ENCODE measurements at regions of chr5 and their contacts with region 1.

Region 1: GRCh38 chr5:56200856-56201666 is 32.1 kb downstream of the ANKRD55 start:
- DNase-seq: peak; percentile 81
- H3K4me3 Mint-ChIP-seq: no peak overlapping the region
- H3K27ac Mint-ChIP-seq: no peak overlapping the region
- H3K4me1 Mint-ChIP-seq: no peaks in the 10 kb centered on the region
- H3K27me3 Mint-ChIP-seq: no peaks in the 10 kb centered on the region
- CTCF ChIP-seq: peak; percentile 87

Region 2: DNA sequence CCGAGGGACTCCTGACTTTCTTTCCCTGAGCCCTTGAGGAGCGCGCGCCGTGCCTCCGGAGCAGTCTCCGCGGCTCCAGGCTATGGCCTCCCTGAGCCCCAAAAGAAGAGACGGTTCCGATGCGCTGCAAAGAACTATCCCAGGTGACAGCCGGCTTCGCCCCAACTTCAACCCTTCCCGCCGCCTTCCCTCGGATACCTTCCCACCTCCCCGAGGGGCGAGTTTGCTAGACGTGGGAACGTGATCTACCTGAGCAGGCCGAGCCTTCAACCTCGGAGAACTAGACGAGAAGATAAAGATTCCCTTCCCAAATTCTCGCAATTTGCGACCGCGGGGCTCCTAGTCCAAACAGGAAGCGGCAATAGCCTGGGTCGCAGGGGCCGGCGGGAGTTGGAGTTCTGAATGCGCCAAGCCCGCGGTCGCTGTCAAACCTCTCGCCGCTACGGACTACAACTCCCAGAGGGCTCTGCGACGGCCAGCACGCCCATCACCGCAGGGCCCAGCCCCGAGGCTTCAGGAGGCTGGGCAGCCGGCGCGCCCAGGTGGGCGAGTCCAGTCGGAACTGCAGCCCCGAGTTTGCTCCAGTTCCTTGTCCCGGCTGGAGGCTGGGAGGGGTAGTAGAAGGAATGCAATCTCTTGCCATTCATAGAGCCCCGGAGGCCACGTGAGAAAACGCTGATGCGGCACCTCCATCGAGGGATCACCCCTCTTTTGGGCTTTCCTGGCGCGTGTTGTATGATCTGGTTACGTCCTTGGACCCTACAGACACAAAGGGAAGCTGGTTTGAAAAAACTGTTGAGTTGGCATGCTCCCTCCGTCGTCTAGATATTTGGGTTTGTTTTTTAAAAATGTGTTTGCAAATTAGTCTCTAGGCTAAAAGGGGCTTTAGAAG is 488.8 kb before region 1 on chr5 and contains the start of gene SLC38A9:
- CTCF ChIA-PET with region 1: interaction called, 3 read pairs
- POLR2A ChIA-PET with region 1: no interaction called
- intact Hi-C with region 1: loop called (anchors 5 kb)
- DNase-seq: peak; percentile 93
- H3K4me3 Mint-ChIP-seq: peak within 1 kb of the TSS; percentile 98
- H3K27ac Mint-ChIP-seq: peak within 1 kb of the TSS; percentile 99
- H3K4me1 Mint-ChIP-seq: peaks cover 5% of the 10 kb centered on the region
- H3K27me3 Mint-ChIP-seq: no peaks in the 10 kb centered on the region
- CTCF ChIP-seq: no peak
- total RNA-seq, gene SLC38A9: 20.1 and 25.6 TPM in 2 replicates

Region 3: DNA sequence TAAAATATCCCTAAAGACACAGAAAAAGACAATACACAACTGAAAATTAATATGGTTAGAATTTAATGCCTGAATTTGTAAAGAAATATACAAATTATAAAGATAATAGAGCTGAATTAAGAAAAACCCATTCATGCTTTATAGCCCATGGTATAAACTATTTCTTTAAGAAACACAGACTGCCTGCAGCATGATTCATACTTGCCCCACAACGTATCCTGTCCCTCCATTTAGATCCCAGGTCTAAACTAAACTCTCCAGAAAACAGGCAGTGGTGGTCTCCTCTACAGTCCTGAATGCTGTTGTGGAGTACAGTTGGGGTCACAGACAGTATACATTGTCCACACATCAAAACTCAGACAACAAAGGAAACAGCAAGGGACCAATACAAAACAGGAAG is 231.1 kb before region 1 on chr5:
- CTCF ChIA-PET with region 1: interaction called, 22 read pairs
- POLR2A ChIA-PET with region 1: no interaction called
- intact Hi-C with region 1: no loop called
- DNase-seq: no peak
- H3K4me3 Mint-ChIP-seq: no peak overlapping the region
- H3K27ac Mint-ChIP-seq: no peak overlapping the region
- H3K4me1 Mint-ChIP-seq: peaks cover 13% of the 10 kb centered on the region
- H3K27me3 Mint-ChIP-seq: no peaks in the 10 kb centered on the region
- CTCF ChIP-seq: no peak

Region 4: GRCh38 chr5:55988979-55989638 is 212.0 kb before region 1 on chr5:
- CTCF ChIA-PET with region 1: interaction called, 59 read pairs
- POLR2A ChIA-PET with region 1: interaction called, 8 read pairs
- intact Hi-C with region 1: loop called (anchors 1 kb)
- DNase-seq: no peak
- H3K4me3 Mint-ChIP-seq: no peak overlapping the region
- H3K27ac Mint-ChIP-seq: no peak overlapping the region
- H3K4me1 Mint-ChIP-seq: peaks cover 25% of the 10 kb centered on the region
- H3K27me3 Mint-ChIP-seq: no peaks in the 10 kb centered on the region
- CTCF ChIP-seq: no peak

Region 5: GRCh38 chr5:56070851-56071465 is 130.1 kb before region 1 on chr5:
- CTCF ChIA-PET with region 1: interaction called, 3 read pairs
- POLR2A ChIA-PET with region 1: no interaction called
- intact Hi-C with region 1: loop called (anchors 10 kb)
- DNase-seq: no peak
- H3K4me3 Mint-ChIP-seq: no peak overlapping the region
- H3K27ac Mint-ChIP-seq: no peak overlapping the region
- H3K4me1 Mint-ChIP-seq: no peaks in the 10 kb centered on the region
- H3K27me3 Mint-ChIP-seq: no peaks in the 10 kb centered on the region
- CTCF ChIP-seq: no peak

Region 6: DNA sequence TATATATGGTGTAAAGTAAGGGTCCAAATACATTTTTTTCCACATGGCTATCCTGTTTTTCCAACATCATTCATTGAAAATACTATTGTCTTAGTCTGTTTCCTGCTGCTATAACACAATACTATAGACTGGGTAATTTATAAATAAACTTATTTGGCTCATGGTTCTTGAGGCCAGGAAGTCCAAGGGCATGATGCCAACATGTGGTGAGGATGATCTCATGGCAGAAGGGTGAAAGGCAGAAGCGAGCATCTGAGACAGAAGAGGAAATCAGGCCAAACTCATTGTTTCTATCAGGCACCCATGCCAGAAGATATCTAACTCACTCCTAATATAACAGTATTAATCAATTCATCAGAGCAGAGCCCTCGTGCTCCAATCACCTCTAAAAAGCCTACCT is 10.6 kb before region 1 on chr5:
- CTCF ChIA-PET with region 1: interaction called, 18 read pairs
- POLR2A ChIA-PET with region 1: no interaction called
- intact Hi-C with region 1: no loop called
- DNase-seq: peak; percentile 84
- H3K4me3 Mint-ChIP-seq: no peak overlapping the region
- H3K27ac Mint-ChIP-seq: no peak overlapping the region
- H3K4me1 Mint-ChIP-seq: no peaks in the 10 kb centered on the region
- H3K27me3 Mint-ChIP-seq: no peaks in the 10 kb centered on the region
- CTCF ChIP-seq: no peak

Measured in MCF 10A (cell line).